HEK293T (cell line): ENCODE measurements at regions of chr22 and their contacts with region 1.

Region 1: DNA sequence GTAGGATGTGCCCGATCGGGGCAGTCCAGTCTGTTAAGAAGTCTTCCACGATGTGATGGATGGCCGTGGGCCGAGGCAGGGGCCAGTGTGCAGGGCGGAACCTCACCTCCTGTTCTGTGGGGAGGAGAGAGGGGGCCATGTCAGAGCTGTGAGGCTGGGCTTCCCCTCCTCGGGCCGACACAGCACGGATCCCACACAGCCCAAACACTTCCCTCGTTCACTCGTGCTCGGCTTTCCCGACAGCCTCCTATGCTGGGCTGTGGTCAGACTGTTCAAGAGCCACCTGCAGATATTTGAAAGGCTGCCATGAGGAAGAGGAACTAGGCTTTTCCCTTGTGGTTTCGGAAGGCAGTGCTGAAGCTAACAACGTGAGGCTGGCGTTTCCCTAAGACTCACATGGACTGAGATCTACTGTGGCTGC is 12.3 kb upstream of the TXN2 start:
- DNase-seq: no peak

Region 2: DNA sequence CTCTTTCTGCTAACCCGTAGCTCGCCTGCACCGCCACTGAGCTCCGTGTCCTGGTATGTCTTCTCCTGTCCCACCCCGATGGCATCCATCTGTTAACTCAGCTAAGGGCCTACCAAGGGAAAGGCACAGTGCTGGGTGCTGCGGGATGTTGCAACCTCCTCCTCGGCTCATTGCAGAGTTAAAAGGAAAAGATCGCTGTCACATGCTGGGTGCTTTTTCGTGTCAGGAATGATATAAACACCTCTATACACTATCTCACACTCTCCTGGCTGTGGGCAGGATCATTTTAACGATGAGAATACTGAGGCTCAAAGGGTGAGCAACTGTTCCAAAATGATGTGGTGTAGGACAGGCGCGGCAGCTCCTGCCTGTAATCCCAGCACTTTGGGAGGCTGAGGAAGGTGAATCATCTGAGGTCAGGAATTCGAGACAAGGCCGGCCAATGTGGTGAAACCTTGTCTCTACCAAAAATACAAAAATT is 22.3 kb before region 1 on chr22:
- CTCF ChIA-PET with region 1: no interaction called
- POLR2A ChIA-PET with region 1: no interaction called
- DNase-seq: no peak

Region 3: GRCh38 chr22:36481393-36482168 is 12.1 kb before region 1 on chr22 and contains the start of gene TXN2:
- CTCF ChIA-PET with region 1: interaction called, 3 read pairs
- POLR2A ChIA-PET with region 1: interaction called, 12 read pairs
- DNase-seq: peak; percentile 98